ENCODE measurements at regions of chr16 and their contacts with region 1.

Region 1: GRCh38 chr16:30004811-30005242 is 6.0 kb downstream of the DOC2A start:
- DNase-seq: no peak
- H3K4me3 ChIP-seq: no peak overlapping the region
- H3K27ac ChIP-seq: no peak overlapping the region
- H3K4me1 ChIP-seq: no peaks in the 10 kb centered on the region
- H3K27me3 ChIP-seq: peaks cover 1% of the 10 kb centered on the region
- CTCF ChIP-seq: no peak
- POLR2A ChIP-seq: no peak

Region 2: GRCh38 chr16:29729116-29729521 is 275.7 kb before region 1 on chr16:
- intact Hi-C with region 1: no loop called
- DNase-seq: no peak
- H3K4me3 ChIP-seq: no peak overlapping the region
- H3K27ac ChIP-seq: no peak overlapping the region
- H3K4me1 ChIP-seq: no peaks in the 10 kb centered on the region
- H3K27me3 ChIP-seq: no peaks in the 10 kb centered on the region
- CTCF ChIP-seq: peak in 3 of 4 experiments; percentile 13 to 59 (median 37)
- POLR2A ChIP-seq: no peak

Region 3: DNA sequence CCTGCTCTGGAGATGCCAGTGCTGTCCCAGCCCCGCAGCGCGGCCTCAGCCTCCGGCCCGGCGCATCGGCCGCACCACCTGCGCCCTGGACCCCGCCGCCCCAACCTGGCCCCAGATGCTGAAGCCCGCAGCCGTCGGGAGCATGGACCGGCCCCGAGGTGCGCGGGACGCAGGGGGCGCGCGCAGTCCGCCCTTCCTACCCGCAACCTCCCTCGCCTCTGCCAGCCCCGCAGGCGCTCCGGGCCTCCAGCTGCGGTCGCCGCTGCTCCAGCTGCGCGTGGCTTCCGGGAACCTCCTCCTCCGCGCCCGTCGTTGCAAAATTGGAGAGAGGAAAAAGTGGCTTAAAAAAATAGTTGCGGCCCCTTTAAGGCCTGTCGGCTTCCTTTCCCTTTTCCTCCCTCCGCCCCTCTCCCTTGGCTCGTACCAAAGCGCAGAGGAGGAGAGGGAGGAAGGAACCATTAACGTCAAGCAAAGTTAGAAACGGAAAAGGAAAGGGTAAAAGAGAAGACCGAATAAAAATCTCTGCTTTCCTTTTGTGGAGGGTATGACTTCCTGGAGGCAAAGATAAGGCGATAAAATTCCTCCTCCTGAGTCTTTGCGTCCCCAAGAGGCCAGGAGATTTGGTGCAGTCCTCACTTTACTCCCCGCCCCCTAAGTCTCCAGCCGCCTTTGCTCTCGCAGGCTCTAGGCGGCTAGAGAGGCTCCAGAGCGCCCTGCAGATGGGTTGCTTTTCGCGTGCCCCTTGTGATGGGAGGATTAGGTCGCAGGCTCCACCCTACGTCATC is 141.8 kb before region 1 on chr16 and contains the start of gene CDIPT:
- intact Hi-C with region 1: loop called (anchors 5 kb)
- DNase-seq: peak; percentile 94
- H3K4me3 ChIP-seq: peak within 1 kb of the TSS; percentile 92 to 99
- H3K27ac ChIP-seq: peak within 1 kb of the TSS; percentile 81 to 96
- H3K4me1 ChIP-seq: peaks cover 10% of the 10 kb centered on the region
- H3K27me3 ChIP-seq: no peaks in the 10 kb centered on the region
- CTCF ChIP-seq: peak in 3 of 4 experiments; percentile 39 to 79 (median 79)
- POLR2A ChIP-seq: peak; percentile 30
- total RNA-seq, gene CDIPT: 121 to 132 TPM

Region 4: GRCh38 chr16:29891525-29892457 is 113.0 kb before region 1 on chr16:
- intact Hi-C with region 1: no loop called
- DNase-seq: no peak
- H3K4me3 ChIP-seq: no peak overlapping the region
- H3K27ac ChIP-seq: no peak overlapping the region
- H3K4me1 ChIP-seq: no peaks in the 10 kb centered on the region
- H3K27me3 ChIP-seq: no peaks in the 10 kb centered on the region
- CTCF ChIP-seq: no peak
- POLR2A ChIP-seq: no peak

Region 5: DNA sequence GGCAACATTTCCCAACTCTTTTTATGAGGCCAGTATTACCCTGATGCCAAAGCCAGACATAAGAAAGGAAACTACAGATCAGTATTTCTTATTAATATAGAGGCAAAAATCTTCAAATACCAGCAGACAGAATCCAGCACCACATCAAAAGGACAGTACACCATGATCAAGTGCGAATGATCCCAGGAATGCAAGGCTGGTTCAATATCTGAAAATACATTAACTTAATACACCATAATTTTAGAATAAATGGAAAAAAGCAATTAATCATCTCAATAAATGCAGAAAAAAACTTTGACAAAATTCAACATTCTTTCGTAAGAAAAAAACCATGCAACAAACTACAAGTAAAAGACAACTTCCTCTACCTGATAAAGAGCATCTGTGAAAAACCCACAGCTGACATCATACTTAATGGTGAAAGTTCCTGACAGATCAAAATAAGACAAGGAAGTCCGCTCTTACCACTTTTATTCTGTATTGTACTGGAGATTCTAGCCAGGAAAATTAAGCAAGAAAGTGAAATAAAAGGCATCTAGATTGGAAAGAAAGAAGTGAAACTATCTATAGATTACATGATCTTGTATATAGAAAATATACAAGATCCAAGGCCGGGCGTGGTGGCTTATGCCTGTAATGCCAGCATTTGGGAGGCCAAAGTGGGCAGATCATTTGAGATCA is 144.6 kb after region 1 on chr16:
- intact Hi-C with region 1: no loop called
- DNase-seq: no peak
- H3K4me3 ChIP-seq: no peak overlapping the region
- H3K27ac ChIP-seq: no peak overlapping the region
- H3K4me1 ChIP-seq: no peaks in the 10 kb centered on the region
- H3K27me3 ChIP-seq: no peaks in the 10 kb centered on the region
- CTCF ChIP-seq: no peak
- POLR2A ChIP-seq: no peak